Motor neuron (in vitro differentiated cells): ENCODE measurements at regions of chr22 and their contacts with region 1.

Region 1: GRCh38 chr22:24423519-24424000 is 3.8 kb upstream of the ADORA2A start:
- ATAC-seq: peak; percentile 70 to 85 (median 77)
- H3K4me3 ChIP-seq: peak overlapping the region; percentile 31 to 39 (median 36)
- H3K27ac ChIP-seq: no peak overlapping the region
- H3K4me1 ChIP-seq: peaks cover 0 to 12% of the 10 kb centered on the region in 2 donors

Region 2: DNA sequence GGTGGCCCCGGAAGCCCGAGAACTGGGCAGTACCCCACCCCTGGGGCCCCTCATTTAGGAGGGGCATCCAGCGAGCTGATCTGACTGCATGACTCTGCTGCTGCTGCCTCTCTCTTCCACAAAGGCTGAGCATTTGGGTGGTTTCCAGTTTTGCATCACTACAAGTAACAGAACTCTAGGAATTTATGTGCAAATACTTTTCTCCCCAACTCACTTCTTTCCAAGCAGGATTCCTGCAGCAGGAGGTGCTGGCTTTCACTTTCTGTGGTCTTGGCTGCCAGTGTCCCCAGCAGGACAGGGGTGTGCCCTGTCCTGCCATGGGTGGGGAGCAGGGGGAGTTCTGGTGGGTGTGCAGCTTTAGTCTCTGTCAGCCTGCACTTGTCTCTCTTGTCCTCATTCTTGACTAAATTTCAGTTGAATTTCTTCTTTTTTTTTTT is 92.8 kb after region 1 on chr22:
- in situ Hi-C with region 1: loop called in 2 of 9 experiments (anchors 10 kb)
- ATAC-seq: peak in 5 of 8 experiments; percentile 40 to 93 (median 88)
- H3K4me3 ChIP-seq: no peak overlapping the region
- H3K27ac ChIP-seq: no peak overlapping the region
- H3K4me1 ChIP-seq: peaks cover 5 to 6% of the 10 kb centered on the region in 2 donors

Region 3: DNA sequence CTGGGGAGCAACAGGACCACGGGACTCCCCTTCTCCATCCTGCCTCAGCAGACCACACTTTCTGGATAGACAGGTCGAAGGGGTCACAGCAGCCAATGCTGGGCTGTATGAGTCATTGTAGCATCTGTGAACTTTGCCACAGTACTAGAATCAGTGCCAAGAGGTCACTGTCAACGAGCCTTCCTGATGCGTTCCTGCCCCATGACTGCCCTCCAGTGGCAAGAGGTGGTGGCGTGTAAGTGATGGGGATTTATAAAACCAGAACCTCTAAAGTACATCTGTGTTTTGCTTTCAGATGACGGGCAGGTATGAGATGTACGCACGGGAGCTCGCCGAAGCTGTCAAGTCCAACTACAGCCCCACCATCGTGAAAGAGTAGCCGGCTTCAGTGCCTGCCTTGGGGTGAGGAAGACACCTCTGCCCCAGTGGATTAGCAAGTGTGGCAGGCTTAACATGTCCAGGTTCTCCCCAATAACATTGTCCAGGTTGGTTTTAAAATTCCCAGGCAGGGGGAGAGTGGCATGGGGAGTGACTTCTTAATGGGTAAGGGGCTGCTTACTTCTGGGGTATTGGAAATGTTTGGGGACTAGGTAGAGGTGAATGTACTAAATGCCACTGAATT is 102.0 kb after region 1 on chr22:
- in situ Hi-C with region 1: loop called in 1 of 9 experiments (anchors 10 kb)
- ATAC-seq: peak; percentile 44 to 90 (median 64)
- H3K4me3 ChIP-seq: no peak overlapping the region
- H3K27ac ChIP-seq: no peak overlapping the region
- H3K4me1 ChIP-seq: peaks cover 3 to 5% of the 10 kb centered on the region in 2 donors

Region 4: GRCh38 chr22:24685531-24686190 is 262.1 kb after region 1 on chr22:
- in situ Hi-C with region 1: no loop called
- ATAC-seq: peak in 2 of 8 experiments; percentile 20 to 23
- H3K4me3 ChIP-seq: no peak overlapping the region
- H3K27ac ChIP-seq: no peak overlapping the region
- H3K4me1 ChIP-seq: peaks cover 3 to 4% of the 10 kb centered on the region in 2 donors

Region 5: GRCh38 chr22:25027959-25028840 is 604.6 kb after region 1 on chr22:
- in situ Hi-C with region 1: no loop called
- ATAC-seq: peak in 4 of 8 experiments; percentile 35 to 47 (median 38)
- H3K4me3 ChIP-seq: no peak overlapping the region
- H3K27ac ChIP-seq: no peak overlapping the region
- H3K4me1 ChIP-seq: peaks cover 7 to 19% of the 10 kb centered on the region in 2 donors